ENCODE measurements at regions of chr1 and their contacts with region 1.

Region 1: GRCh38 chr1:182181167-182181682 is 119.7 kb upstream of the ZNF648 start:
- DNase-seq: no peak
- H3K4me3 ChIP-seq: no peak overlapping the region
- H3K27ac ChIP-seq: no peak overlapping the region
- H3K4me1 ChIP-seq: no peaks in the 10 kb centered on the region
- H3K27me3 ChIP-seq: no peaks in the 10 kb centered on the region
- CTCF ChIP-seq: no peak
- EP300 ChIP-seq: no peak
- POLR2A ChIP-seq: no peak
- RAD21 ChIP-seq: no peak

Region 2: GRCh38 chr1:182198049-182198501 is 16.9 kb after region 1 on chr1:
- CTCF ChIA-PET with region 1: interaction called, 30 read pairs
- POLR2A ChIA-PET with region 1: interaction called, 3 read pairs
- DNase-seq: no peak
- H3K4me3 ChIP-seq: no peak overlapping the region
- H3K27ac ChIP-seq: no peak overlapping the region
- H3K4me1 ChIP-seq: no peaks in the 10 kb centered on the region
- H3K27me3 ChIP-seq: no peaks in the 10 kb centered on the region
- CTCF ChIP-seq: peak in 2 of 3 experiments; percentile 40 to 65; a peak in 2 of 4 replicates
- EP300 ChIP-seq: no peak
- POLR2A ChIP-seq: no peak
- RAD21 ChIP-seq: peak; percentile 51 to 58

Measured in H1 (cell line).